ENCODE measurements at regions of chr16 and their contacts with region 1.

Region 1: DNA sequence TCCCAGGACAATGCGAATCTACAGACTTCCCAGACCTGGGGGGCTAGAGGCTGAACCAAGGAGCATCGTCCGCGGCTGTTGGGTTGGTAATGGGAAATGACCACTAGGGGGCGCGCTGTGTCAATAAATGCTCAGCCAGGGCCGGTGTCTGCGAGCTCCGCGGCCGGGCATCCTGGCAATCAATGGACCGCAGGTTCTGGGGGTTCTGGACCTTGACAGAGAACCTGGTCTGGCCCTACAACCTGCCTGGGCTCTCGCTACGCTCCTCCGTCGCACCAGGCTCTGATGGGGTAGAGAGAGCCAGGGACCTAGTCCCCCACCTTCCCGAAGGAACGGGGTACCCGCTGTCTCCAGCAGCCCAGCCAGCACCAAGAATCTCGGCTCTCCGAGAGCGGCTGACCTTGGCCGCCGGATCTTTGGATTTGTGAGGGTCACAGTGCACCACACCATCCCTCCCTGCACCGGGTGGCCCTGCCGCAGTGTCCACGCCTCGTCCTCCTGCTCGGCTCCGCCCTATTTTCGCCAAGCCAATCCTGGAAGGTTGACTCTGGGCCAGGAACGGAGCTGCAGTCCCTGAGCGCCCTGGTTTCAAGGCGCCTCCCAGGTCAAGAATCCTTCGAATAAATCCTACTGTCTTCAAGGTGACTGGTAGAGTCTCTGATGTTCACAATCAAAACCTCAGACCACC is 20.4 kb upstream of the BEAN1 start:
- DNase-seq: peak; percentile 90
- H3K4me3 Mint-ChIP-seq: peak overlapping the region; percentile 72
- H3K27ac Mint-ChIP-seq: peak overlapping the region; percentile 21
- H3K4me1 Mint-ChIP-seq: peaks cover 29% of the 10 kb centered on the region
- H3K27me3 Mint-ChIP-seq: peaks cover 14% of the 10 kb centered on the region

Region 2: GRCh38 chr16:66474750-66475199 is 68.1 kb after region 1 on chr16:
- CTCF ChIA-PET with region 1: interaction called, 17 read pairs
- POLR2A ChIA-PET with region 1: no interaction called
- DNase-seq: peak; percentile 83
- H3K4me3 Mint-ChIP-seq: no peak overlapping the region
- H3K27ac Mint-ChIP-seq: peak overlapping the region; percentile 39
- H3K4me1 Mint-ChIP-seq: peaks cover 51% of the 10 kb centered on the region
- H3K27me3 Mint-ChIP-seq: no peaks in the 10 kb centered on the region

Region 3: DNA sequence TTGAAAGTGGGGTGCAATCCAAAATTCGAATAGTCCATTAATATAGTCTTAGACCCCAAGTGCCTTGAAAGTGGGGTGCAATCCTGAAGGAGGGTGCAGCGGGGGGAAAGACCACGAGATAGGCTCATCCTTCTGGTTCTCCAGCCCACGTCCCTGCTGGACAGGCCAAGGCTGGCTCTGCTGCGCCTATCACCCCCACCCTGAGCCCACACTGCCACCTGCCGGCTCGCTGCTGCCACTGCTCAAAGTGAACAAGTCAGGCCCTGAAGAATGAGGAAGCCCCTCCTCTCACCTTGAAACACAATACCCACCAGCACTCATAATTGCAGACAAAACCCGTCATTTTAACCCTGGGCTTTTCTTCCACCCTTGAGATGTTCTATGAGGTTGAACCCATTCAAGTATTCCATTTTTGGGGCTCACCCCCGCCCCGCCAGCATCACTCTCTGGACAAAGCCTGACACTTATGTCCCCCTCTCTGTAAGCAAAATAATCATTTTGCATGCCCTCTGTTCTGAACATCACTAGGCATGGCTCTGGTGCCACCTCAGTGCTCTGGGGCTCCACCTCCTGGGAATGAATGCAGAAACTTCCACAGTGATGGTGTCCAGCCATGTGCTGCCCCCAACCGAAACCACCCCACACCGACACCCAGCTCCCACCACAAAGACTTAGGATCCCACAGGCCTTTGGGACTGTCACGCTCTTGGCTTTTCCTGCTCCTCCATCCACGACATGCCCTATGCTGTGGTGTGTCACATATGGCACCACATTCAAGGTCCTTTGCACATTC is 77.2 kb after region 1 on chr16:
- CTCF ChIA-PET with region 1: interaction called, 11 read pairs
- POLR2A ChIA-PET with region 1: no interaction called
- DNase-seq: peak; percentile 78
- H3K4me3 Mint-ChIP-seq: no peak overlapping the region
- H3K27ac Mint-ChIP-seq: no peak overlapping the region
- H3K4me1 Mint-ChIP-seq: peaks cover 31% of the 10 kb centered on the region
- H3K27me3 Mint-ChIP-seq: no peaks in the 10 kb centered on the region

Measured in activated CD4-positive, alpha-beta T cell treated with anti-CD3 and anti-CD28 coated beads, Interleukin-2, amount 10 ng/mL, durations not matched to agents 7 days and 5 days (primary cell).